Prostate gland (tissue), 2 donors: ENCODE measurements at regions of chr14 and their contacts with region 1.

Region 1: DNA sequence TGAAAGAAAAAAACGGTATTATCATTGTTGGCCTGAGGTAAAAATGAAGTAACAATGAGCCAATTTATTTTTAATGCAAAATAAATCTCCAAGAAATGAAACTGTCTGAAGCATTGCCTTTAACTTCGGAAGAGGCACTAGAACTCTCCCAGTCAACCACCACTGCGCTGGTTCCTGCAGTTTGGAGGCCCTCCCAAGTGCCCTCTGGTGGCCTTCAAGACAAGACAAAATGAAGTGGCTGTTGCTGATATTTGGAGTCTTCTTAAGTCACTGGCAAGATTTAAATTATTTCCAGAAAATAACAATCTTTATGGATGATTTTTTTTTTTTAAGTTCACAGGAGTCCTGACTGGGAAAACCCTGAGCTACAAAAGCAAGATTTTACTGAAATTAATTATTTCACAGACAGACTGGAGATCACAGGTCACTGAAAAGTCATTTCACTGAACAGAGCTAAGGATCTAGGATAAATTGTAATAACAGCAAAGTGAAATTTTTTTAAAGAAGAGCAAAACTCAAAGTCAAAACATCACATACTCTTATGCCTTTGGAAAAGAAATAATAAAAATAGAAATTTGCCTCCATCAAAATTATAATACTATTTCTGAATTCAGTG is 58.2 kb downstream of the DICER1 start:
- DNase-seq: peak; percentile 70
- H3K4me3 ChIP-seq: no peak overlapping the region
- H3K27ac ChIP-seq: no peak overlapping the region
- H3K4me1 ChIP-seq: no peaks in the 10 kb centered on the region
- H3K27me3 ChIP-seq: no peaks in the 10 kb centered on the region
- CTCF ChIP-seq: peak; percentile 29 to 69 (median 62)
- POLR2A ChIP-seq: no peak

Region 2: GRCh38 chr14:94691660-94692034 is 407.4 kb before region 1 on chr14:
- intact Hi-C with region 1: loop called (anchors 10 kb)
- DNase-seq: no peak
- H3K4me3 ChIP-seq: no peak overlapping the region
- H3K27ac ChIP-seq: no peak overlapping the region
- H3K4me1 ChIP-seq: no peaks in the 10 kb centered on the region
- H3K27me3 ChIP-seq: no peaks in the 10 kb centered on the region
- CTCF ChIP-seq: no peak
- POLR2A ChIP-seq: no peak

Region 3: GRCh38 chr14:94827711-94828447 is 271.2 kb before region 1 on chr14:
- intact Hi-C with region 1: loop called (anchors 5 kb)
- DNase-seq: peak; percentile 75
- H3K4me3 ChIP-seq: no peak overlapping the region
- H3K27ac ChIP-seq: peak overlapping the region; percentile 17 to 30
- H3K4me1 ChIP-seq: no peaks in the 10 kb centered on the region
- H3K27me3 ChIP-seq: no peaks in the 10 kb centered on the region
- CTCF ChIP-seq: no peak
- POLR2A ChIP-seq: no peak

Region 4: DNA sequence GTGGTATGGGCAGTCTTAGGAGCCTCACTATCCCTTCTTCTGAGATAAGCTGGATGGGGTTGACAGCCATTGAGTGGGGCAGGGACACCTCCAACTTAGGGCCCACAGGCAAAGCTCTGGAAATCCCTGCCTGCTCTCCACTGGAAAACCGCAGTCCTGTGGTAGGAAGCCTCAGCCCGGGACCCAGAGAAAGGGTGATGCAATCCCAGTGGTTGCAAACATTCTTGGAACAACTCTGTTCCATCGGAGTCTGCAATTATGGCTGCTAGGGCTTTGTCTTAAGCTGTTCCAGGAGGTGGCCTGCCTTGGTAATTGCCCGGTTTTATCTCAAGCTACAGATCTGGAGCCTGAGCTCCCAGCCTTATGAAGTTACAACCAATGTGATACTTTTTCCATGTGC is 75.2 kb before region 1 on chr14:
- intact Hi-C with region 1: no loop called
- DNase-seq: no peak
- H3K4me3 ChIP-seq: no peak overlapping the region
- H3K27ac ChIP-seq: no peak overlapping the region
- H3K4me1 ChIP-seq: no peaks in the 10 kb centered on the region
- H3K27me3 ChIP-seq: no peaks in the 10 kb centered on the region
- CTCF ChIP-seq: no peak
- POLR2A ChIP-seq: no peak

Region 5: GRCh38 chr14:95150910-95151309 is 51.8 kb after region 1 on chr14:
- intact Hi-C with region 1: loop called (anchors 5 kb)
- DNase-seq: no peak
- H3K4me3 ChIP-seq: no peak overlapping the region
- H3K27ac ChIP-seq: no peak overlapping the region
- H3K4me1 ChIP-seq: peaks cover 3% of the 10 kb centered on the region
- H3K27me3 ChIP-seq: no peaks in the 10 kb centered on the region
- CTCF ChIP-seq: no peak
- POLR2A ChIP-seq: no peak

Region 6: DNA sequence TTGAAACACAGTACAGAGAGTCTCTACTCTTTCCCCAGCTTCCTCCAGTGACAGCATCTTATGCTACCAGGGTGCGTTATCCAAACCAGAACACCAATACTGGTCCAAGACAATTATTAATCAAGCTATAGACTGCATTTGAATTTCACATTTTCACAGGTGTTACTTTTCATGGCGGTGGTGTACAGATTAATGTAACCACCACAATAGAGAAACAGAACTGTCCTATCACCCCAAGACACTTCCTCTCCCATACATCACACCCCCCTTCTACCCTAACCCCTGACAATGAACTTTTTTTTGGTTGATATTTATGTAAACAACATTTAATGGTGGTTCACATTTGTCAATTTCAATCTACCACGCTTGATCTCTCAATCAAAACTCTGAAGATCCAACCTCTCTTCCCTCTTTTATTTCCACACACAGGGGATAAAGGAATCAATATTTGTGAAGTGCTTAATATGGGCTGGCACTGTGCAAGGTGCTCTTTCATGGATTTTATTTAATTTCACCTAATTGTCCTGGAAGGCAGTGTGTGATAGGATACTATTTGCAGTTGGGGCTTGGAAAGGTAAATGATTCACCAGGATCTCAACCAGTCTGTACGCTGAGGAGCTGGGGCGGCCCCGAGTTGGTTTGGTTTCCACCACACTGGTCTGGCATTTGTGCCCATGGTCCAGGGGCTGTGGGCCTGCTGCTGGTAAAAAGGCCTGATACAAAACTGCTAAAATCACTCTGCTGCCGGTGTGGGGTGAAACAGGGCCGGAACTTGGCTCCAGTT is 112.8 kb after region 1 on chr14:
- intact Hi-C with region 1: no loop called
- DNase-seq: no peak
- H3K4me3 ChIP-seq: no peak overlapping the region
- H3K27ac ChIP-seq: no peak overlapping the region
- H3K4me1 ChIP-seq: no peaks in the 10 kb centered on the region
- H3K27me3 ChIP-seq: no peaks in the 10 kb centered on the region
- CTCF ChIP-seq: no peak
- POLR2A ChIP-seq: no peak